ENCODE measurements at regions of chr14 and their contacts with region 1.

Region 1: DNA sequence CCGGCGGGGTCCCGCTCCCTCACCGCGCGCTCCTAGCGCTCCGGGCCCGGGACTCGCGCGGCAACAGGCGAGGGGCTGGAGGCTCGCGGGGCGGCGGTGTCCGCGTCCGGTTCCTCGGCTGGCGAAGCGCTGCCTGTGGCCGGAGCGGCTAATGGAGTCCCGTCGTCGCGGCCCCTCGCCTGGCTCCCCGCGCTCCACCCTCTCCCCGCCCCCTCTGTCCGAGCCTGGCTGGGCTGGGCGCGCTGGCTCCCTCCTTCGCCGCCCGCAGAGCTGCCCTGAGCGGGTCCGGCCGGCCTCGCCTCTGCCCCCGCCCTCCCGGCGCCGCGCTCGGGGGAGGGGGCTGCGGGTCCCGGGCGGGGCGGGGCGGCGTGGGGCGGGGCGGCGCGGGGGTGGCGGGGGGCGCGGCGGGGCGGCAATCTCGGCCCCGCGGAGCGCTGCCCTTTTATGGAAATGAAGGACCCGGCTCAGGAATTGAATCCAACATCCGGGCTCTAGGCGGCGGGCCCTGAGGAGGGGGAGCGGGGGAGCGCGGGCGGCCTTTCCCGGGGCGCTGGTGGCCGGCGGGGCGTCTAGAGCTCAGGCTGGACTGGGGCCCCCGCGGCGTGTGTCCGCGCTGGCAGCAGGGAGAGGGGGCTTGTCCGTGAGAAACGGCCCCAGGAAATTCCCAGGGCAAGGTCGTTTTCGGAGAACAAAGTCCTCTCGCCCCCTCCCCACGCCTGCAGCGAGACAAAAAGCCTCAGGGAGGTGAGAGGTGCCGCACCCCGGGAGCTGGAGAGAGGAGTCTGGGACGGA is at the start of gene FERMT2:
- DNase-seq: peak; percentile 3

Region 2: DNA sequence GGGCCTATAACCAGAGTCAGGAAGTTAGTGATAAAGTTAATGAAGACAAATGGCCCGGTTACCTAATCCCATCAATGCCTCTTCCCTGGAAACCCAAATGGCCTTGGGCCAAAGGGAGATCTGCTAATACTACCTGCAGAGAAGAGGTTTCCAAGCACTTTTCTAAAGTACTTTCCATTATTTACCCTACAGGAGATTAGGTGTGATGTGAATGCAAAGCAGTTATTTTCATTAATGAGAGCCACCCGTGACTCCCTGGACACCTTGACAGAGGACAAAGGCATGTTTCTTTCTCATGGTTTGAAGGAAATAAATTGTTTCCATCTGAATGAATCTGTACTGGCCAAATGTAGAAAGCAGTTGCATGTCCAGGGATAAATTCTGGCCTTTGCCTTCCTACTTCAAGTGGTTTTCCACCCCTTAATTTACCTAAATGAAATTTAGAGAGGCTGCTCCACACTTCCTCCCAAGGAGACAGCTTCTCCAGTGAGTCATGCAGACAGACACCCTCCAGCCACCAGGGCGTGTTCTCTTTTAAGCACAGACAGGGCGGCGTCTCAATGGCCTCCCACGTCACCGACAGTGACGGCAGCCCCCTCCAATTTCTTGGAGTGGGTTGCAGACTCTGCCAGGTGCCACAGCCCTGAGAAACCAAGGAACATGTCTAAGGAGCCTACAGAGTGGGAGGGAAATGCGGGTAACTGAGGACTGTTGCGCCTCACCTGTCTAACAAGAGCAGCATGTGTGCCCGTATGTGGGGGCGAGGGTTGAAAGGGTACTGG is 115.8 kb before region 1 on chr14:
- in situ Hi-C with region 1: loop called (anchors 25 kb)
- DNase-seq: no peak

Measured in KBM-7 (cell line).